ENCODE measurements at regions of chr2 and their contacts with region 1.

Region 1: DNA sequence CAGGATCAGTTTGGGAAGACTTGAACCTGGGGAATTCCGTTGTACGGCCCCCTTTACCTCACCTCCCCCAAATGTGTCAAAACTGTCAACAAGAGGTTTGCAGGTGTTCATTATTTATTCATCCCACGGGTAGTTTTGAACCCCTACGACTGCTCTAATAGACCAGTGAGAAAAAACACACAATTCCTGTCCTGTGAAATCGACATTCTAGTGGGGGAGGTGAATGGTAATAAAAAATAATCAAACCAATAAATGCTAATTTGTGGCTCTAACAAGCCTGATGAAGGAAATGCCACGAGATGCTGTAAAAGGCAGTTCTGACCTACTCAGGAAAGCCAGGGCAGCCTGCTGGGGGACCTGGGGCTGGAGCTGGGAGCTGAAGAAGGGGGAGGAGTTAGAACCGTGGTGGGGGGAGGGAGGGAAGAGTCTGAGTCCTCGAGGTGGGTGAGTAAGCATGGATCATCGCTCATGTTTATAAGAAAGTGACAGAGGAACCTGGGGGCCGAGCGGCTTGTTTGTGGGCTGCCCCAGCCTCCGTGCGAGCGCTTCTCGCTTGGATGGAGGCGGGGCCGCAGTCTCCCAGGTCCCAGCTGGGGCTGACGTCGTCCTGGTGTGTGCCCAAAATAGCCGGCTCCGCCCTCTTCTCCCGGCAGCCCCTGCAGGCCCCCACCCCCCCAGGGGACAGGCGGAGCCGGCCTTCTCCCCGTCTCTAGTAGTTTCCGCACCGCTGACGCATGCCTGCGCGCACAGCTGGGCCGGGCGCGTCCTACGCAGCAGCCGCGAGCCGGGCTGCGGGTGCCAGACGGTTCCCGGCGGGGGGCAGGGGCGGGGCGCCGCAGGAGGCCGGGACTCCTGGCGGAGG is at the start of gene DNAJB2:
- DNase-seq: peak; percentile 99
- ATAC-seq: peak; percentile 76
- H3K4me3 ChIP-seq: peak within 1 kb of the TSS; percentile 49 to 80 (median 77)
- H3K4me3 Mint-ChIP-seq: peak within 1 kb of the TSS; percentile 92
- H3K27ac ChIP-seq: peak within 1 kb of the TSS; percentile 98 to 100
- H3K27ac Mint-ChIP-seq: peak within 1 kb of the TSS; percentile 96
- H3K4me1 ChIP-seq: peaks cover 32 to 48% of the 10 kb centered on the region in 2 donors
- H3K4me1 Mint-ChIP-seq: peaks cover 48% of the 10 kb centered on the region
- H3K27me3 ChIP-seq: no peaks in the 10 kb centered on the region
- H3K27me3 Mint-ChIP-seq: no peaks in the 10 kb centered on the region
- CTCF ChIP-seq: no peak
- total RNA-seq, gene DNAJB2: 169 and 184 TPM in 2 replicates

Region 2: GRCh38 chr2:218898109-218898878 is 380.6 kb before region 1 on chr2:
- CTCF ChIA-PET with region 1: interaction called, 3 read pairs
- POLR2A ChIA-PET with region 1: interaction called, 15 read pairs
- intact Hi-C with region 1: loop called (anchors 2 kb)
- DNase-seq: peak; percentile 87
- ATAC-seq: peak; percentile 18
- H3K4me3 ChIP-seq: peak overlapping the region in 4 of 5 experiments; percentile 66 to 68 (median 68)
- H3K4me3 Mint-ChIP-seq: peak overlapping the region; percentile 87
- H3K27ac ChIP-seq: no peak overlapping the region
- H3K27ac Mint-ChIP-seq: peak overlapping the region; percentile 91
- H3K4me1 ChIP-seq: peaks cover 47 to 54% of the 10 kb centered on the region in 2 donors
- H3K4me1 Mint-ChIP-seq: peaks cover 48% of the 10 kb centered on the region
- H3K27me3 ChIP-seq: peaks cover 0 to 28% (median 18%) of the 10 kb centered on the region in 4 experiments
- H3K27me3 Mint-ChIP-seq: peaks cover 31% of the 10 kb centered on the region
- CTCF ChIP-seq: peak; percentile 99

Region 3: DNA sequence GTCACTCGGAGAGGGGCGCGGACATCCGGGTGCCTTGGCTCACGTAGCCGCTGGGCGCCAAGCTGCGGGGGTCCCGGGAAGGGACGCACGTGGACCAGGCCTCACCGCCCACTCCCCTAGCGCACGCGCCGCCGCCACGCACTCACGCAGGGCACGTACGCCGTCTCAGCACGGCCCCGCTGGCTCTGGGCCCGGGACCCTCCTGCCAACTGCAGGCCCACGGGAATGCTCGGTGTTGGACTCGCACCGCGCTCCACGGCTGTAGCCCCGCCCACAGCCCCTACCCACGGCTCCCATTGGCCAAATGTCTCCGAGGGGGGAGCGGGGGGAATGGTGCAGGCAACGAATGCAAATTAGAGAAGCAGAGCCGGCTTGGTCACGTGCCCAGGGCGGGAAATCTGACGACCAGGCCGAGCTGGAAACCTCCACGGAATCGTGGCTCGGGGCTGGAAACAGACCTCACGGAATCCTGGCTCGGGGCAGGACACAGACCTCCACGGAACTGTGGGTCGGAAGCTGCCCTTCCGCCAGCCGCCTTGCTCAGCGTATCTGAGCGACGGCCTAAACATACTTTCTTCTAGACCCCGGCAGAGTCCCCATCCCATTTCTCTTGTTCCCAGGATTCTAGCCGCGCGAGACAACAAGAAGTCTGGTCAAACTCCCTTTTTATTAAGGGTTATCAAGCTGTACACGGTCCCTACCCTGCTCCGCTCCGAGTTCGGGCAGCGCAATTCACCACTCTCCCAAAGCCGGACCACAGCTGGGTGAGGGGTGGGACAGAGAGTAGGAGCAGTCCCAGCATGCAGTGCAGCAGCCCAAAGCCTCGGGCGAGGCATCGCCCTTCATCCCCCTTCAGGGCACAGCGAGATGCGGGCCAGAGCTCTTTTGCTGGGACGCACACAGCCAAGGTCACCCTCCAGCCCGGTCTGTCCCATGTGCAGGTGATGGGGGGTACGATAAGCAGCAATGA is 59.9 kb before region 1 on chr2 and contains the start of gene ABCB6:
- CTCF ChIA-PET with region 1: interaction called, 4 read pairs
- POLR2A ChIA-PET with region 1: interaction called, 8 read pairs
- intact Hi-C with region 1: loop called (anchors 1 kb)
- DNase-seq: peak; percentile 92
- ATAC-seq: peak; percentile 95
- H3K4me3 ChIP-seq: peak within 1 kb of the TSS; percentile 51 to 74 (median 66)
- H3K4me3 Mint-ChIP-seq: peak within 1 kb of the TSS; percentile 87
- H3K27ac ChIP-seq: peak within 1 kb of the TSS; percentile 0 to 55
- H3K27ac Mint-ChIP-seq: peak within 1 kb of the TSS; percentile 86
- H3K4me1 ChIP-seq: peaks cover 17 to 21% of the 10 kb centered on the region in 2 donors
- H3K4me1 Mint-ChIP-seq: peaks cover 20% of the 10 kb centered on the region
- H3K27me3 ChIP-seq: no peaks in the 10 kb centered on the region
- H3K27me3 Mint-ChIP-seq: no peaks in the 10 kb centered on the region
- CTCF ChIP-seq: no peak
- total RNA-seq, gene ABCB6: 10.5 and 12.3 TPM in 2 replicates

Region 4: DNA sequence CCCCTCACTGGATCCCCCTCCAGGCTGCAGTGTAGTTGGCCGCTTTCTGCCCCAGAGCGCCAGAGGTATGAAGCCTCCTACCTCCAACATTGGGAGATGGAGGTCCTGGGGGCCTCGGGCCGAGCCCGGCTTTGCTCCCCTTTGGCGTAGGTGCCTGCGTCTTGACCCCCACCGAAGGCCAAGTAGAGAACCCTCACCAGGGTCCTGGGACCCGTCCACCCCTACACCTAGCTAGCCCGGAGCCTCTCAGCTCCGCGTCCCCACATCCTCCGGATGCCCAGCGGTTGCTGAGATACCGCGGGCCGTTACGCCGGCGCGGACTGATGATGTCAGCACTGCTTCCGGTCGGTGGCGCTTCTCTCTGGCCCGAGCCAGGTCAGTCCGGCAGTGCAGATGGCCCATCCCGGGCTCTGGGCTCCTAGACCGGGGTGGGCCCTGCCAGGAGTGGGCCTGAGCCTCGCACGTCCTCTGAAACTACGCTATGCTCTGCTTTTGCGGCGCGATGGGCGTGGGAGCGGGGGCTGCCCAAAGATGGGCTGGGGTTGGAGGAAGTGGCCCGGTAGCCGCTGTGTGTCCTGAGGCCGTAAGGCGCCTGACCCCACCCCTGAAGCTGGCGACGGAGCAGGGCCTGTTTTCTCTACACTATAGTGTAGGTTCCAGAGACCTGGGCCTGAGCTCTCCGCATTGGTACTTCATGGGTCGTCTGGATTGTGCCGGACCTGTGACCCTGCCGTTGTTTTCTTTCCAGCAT is 33.6 kb before region 1 on chr2 and contains the starts of genes GLB1L and STK16:
- CTCF ChIA-PET with region 1: interaction called, 35 read pairs
- POLR2A ChIA-PET with region 1: interaction called, 39 read pairs
- intact Hi-C with region 1: loop called (anchors 2 kb)
- DNase-seq: peak; percentile 93
- ATAC-seq: peak; percentile 67
- H3K4me3 ChIP-seq: peak within 1 kb of the TSS; percentile 50 to 98 (median 94)
- H3K4me3 Mint-ChIP-seq: peak within 1 kb of the TSS; percentile 92
- H3K27ac ChIP-seq: peak within 1 kb of the TSS; percentile 87 to 92
- H3K27ac Mint-ChIP-seq: peak within 1 kb of the TSS; percentile 96
- H3K4me1 ChIP-seq: peaks cover 52 to 58% of the 10 kb centered on the region in 2 donors
- H3K4me1 Mint-ChIP-seq: peaks cover 62% of the 10 kb centered on the region
- H3K27me3 ChIP-seq: no peaks in the 10 kb centered on the region
- H3K27me3 Mint-ChIP-seq: no peaks in the 10 kb centered on the region
- CTCF ChIP-seq: no peak
- total RNA-seq, gene GLB1L: 3.9 and 4.1 TPM in 2 replicates
- total RNA-seq, gene STK16: 29.0 and 29.3 TPM in 2 replicates

Region 5: GRCh38 chr2:219266886-219267285 is 12.0 kb before region 1 on chr2:
- CTCF ChIA-PET with region 1: interaction called, 11 read pairs
- POLR2A ChIA-PET with region 1: no interaction called
- intact Hi-C with region 1: no loop called
- DNase-seq: no peak
- ATAC-seq: no peak
- H3K4me3 ChIP-seq: no peak overlapping the region
- H3K4me3 Mint-ChIP-seq: no peak overlapping the region
- H3K27ac ChIP-seq: no peak overlapping the region
- H3K27ac Mint-ChIP-seq: no peak overlapping the region
- H3K4me1 ChIP-seq: no peaks in the 10 kb centered on the region
- H3K4me1 Mint-ChIP-seq: no peaks in the 10 kb centered on the region
- H3K27me3 ChIP-seq: no peaks in the 10 kb centered on the region
- H3K27me3 Mint-ChIP-seq: no peaks in the 10 kb centered on the region
- CTCF ChIP-seq: no peak

Region 6: GRCh38 chr2:219498280-219499057 is 219.6 kb after region 1 on chr2 and contains the start of gene GMPPA:
- CTCF ChIA-PET with region 1: no interaction called
- POLR2A ChIA-PET with region 1: no interaction called
- intact Hi-C with region 1: loop called (anchors 5 kb)
- DNase-seq: peak; percentile 94
- ATAC-seq: peak; percentile 96
- H3K4me3 ChIP-seq: peak within 1 kb of the TSS; percentile 65 to 90 (median 79)
- H3K4me3 Mint-ChIP-seq: peak within 1 kb of the TSS; percentile 93
- H3K27ac ChIP-seq: peak within 1 kb of the TSS in 1 of 2 donors; percentile 84
- H3K27ac Mint-ChIP-seq: peak within 1 kb of the TSS; percentile 87
- H3K4me1 ChIP-seq: peaks cover 38% of the 10 kb centered on the region in 2 donors
- H3K4me1 Mint-ChIP-seq: peaks cover 32% of the 10 kb centered on the region
- H3K27me3 ChIP-seq: peaks cover 0 to 46% (median 23%) of the 10 kb centered on the region in 4 experiments
- H3K27me3 Mint-ChIP-seq: peaks cover 33% of the 10 kb centered on the region
- CTCF ChIP-seq: no peak
- total RNA-seq, gene GMPPA: 27.8 and 32.0 TPM in 2 replicates

Region 7: DNA sequence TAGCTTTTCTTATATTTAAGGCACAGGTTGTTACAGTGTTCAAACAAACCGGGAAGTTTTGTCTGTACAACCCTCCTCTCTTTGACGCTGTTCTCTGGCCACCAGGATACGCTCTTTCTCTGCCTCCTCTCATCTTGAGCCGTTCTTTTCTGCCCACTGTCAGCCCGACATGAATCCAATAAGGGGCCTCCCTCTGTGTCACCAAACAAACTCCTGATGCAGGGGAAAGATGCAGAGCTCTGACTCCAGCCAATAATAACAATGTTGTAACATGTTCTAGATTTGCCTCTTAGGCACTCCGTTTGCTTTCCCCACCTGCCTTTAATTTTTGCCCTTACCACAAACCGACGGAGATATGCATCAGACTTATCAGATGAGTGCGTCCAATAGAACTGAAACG is 797.9 kb after region 1 on chr2:
- CTCF ChIA-PET with region 1: no interaction called
- POLR2A ChIA-PET with region 1: no interaction called
- intact Hi-C with region 1: no loop called
- DNase-seq: no peak
- ATAC-seq: no peak
- H3K4me3 ChIP-seq: no peak overlapping the region
- H3K4me3 Mint-ChIP-seq: no peak overlapping the region
- H3K27ac ChIP-seq: no peak overlapping the region
- H3K27ac Mint-ChIP-seq: no peak overlapping the region
- H3K4me1 ChIP-seq: no peaks in the 10 kb centered on the region
- H3K4me1 Mint-ChIP-seq: no peaks in the 10 kb centered on the region
- H3K27me3 ChIP-seq: no peaks in the 10 kb centered on the region
- H3K27me3 Mint-ChIP-seq: no peaks in the 10 kb centered on the region
- CTCF ChIP-seq: no peak